ENCODE measurements at regions of chr20 and their contacts with region 1.

Region 1: DNA sequence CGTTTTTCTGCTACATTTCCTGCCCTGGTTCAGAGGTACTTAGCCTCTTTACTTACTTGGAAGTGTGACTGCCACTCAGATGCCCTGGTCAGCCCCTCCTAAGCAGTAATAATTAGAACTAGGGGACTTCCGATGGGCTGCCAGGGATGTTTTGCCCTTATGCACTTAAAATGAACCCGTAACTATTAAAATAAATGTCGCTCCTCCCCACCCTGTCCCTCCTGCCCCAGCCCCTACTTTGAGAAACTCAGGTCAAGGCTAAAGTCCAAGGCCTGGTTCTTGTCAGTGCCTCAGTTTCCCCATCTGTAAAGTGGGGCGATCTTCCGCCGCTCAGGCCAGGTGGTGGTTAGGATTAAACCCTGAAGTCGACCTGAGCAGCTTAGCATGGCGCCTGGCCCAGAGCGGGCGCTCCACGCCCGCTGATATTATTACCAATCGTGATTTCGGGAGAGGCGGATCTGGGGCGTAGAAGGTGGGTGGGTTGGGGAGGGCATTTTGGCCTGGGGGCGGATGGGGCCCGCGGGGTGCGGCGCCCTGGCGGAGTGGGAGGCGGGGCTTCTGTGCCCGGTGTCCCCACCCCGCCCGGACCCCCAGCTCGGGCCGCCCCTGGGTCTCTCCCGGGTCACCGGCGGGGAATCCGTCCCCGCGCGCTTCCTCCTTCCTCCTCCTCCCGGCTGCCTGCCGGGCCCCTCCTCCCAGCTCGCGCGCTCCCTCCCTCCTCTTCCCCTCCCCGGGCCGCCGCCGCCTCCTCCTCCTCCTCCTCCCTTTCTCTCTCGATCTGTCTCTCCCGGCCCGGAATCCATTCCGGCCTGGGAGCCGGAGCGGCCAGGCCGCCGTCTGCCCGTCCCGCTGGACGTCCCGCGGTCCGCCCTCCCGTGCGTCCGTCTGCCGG is at the start of gene SRC:
- DNase-seq: peak; percentile 91
- H3K4me3 ChIP-seq: peak within 1 kb of the TSS; percentile 44
- H3K27ac ChIP-seq: peak within 1 kb of the TSS; percentile 95
- H3K4me1 ChIP-seq: peaks cover 9% of the 10 kb centered on the region
- H3K27me3 ChIP-seq: no peaks in the 10 kb centered on the region
- CTCF ChIP-seq: no peak
- total RNA-seq, gene SRC: 102 to 123 TPM

Region 2: DNA sequence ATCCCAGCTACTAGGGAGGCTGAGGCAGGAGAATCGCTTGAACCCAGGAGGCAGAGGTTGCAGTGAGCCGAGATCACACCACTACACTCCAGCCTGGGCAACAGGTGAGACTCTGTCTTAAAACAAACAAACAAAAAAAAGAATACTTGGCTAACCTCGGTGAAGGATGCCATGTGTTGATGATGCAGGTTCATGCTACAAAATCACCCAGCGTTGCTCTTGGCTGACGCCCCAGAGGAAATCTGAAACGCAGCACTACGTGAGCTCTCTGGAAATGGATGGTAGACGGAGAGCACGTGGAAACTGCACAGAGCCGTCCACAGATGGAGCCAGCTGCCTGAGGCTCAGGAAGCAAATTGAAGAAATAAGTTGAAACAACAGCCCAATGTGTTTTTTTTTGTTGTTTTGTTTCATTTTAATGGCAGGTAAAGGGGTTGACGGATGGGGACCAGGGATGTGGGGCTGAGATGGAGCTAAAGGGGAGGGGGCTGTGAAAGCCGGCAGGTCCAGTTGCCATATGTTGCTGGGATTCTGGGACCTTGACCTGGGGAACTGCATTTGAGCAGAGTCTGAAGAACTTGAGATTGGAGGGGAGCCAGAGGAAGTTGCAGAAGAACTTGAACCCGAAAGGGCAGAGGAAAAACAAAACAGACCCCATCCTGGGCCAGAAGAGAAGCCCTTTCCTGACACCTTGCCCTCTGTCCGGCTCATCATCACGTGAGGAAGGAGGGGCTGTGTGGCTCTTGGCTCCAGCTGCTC is 68.9 kb before region 1 on chr20:
- intact Hi-C with region 1: no loop called
- DNase-seq: peak; percentile 53
- H3K4me3 ChIP-seq: no peak overlapping the region
- H3K27ac ChIP-seq: no peak overlapping the region
- H3K4me1 ChIP-seq: peaks cover 5% of the 10 kb centered on the region
- H3K27me3 ChIP-seq: no peaks in the 10 kb centered on the region
- CTCF ChIP-seq: peak; percentile 31

Region 3: DNA sequence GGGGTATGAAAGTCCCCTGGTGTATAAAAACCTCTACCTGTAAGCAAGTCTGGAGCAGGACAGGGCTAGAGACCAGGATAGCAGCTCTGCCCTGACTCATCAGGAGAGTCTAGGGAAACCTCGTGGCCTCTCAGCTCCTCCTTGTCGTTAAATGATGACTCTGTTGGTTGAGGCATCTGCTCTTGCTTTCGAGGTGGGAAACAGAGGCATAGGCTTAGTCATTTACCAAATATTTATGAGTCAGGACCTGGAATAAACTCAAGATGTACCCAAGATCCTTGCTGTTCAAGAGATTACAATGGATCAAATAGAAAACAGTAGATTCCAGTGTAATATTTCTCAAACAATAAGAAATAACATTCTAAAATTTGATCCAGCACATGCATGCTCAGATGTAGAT is 50.6 kb before region 1 on chr20:
- intact Hi-C with region 1: loop called (anchors 10 kb)
- DNase-seq: no peak
- H3K4me3 ChIP-seq: no peak overlapping the region
- H3K27ac ChIP-seq: peak overlapping the region; percentile 69
- H3K4me1 ChIP-seq: peaks cover 17% of the 10 kb centered on the region
- H3K27me3 ChIP-seq: no peaks in the 10 kb centered on the region
- CTCF ChIP-seq: no peak

Region 4: DNA sequence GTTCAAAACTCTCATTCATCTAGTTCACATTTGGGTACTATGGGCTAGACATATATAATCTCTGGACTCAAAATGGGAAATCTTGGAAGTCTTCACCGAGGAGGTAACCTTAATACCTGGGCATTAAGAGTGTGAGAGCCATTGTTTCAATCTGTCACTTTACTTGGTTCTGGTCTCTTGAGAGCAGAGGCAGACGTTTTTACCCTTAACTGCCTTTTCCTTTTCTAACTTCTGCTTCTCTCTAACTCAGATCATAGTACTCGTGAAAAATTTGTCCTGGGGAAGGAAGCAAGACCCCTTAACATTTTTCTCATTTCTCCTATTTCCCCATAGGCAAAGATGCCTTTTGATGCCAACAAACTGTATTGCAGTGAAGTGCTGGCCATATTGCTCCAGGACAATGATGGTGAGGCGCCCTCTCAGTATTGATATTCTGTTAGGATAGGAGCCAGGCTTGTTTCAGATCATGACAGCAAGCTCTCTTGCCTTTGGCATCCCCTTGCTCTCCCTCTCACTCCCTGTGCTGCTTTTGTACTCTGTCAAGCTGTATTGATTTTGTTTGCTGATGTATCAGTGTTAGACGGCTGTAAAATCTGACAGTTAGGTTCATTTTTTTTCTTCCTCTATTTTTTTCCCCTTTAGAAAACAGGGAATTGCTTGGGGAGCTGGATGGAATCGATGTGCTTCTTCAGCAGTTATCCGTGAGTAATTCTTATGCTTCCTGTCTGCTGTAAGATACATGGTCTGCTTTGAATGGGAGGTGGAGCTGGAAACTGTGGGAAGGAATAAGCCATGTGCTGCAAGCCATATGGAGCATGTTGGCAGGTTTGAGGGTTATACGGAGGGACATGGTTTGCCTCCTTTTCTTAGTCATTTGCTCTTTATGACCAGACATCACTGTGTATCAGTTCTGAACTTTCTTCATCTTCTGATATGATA is 431.7 kb after region 1 on chr20:
- intact Hi-C with region 1: no loop called
- DNase-seq: no peak
- H3K4me3 ChIP-seq: no peak overlapping the region
- H3K27ac ChIP-seq: no peak overlapping the region
- H3K4me1 ChIP-seq: no peaks in the 10 kb centered on the region
- H3K27me3 ChIP-seq: no peaks in the 10 kb centered on the region
- CTCF ChIP-seq: no peak

Region 5: GRCh38 chr20:37853823-37854375 is 508.3 kb after region 1 on chr20:
- intact Hi-C with region 1: no loop called
- DNase-seq: no peak
- H3K4me3 ChIP-seq: no peak overlapping the region
- H3K27ac ChIP-seq: no peak overlapping the region
- H3K4me1 ChIP-seq: no peaks in the 10 kb centered on the region
- H3K27me3 ChIP-seq: no peaks in the 10 kb centered on the region
- CTCF ChIP-seq: no peak

Measured in colonic mucosa (tissue), 4 donors.